Right ventricle myocardium superior (tissue), 1 donor: ENCODE measurements at regions of chr1 and their contacts with region 1.

Region 1: GRCh38 chr1:91929250-91929649 is 20.0 kb upstream of the BRDT start:
- DNase-seq: no peak
- ATAC-seq: peak; percentile 62

Region 2: GRCh38 chr1:91282695-91283420 is 646.4 kb before region 1 on chr1:
- intact Hi-C with region 1: loop called (anchors 5 kb)
- DNase-seq: no peak
- ATAC-seq: peak; percentile 91

Region 3: DNA sequence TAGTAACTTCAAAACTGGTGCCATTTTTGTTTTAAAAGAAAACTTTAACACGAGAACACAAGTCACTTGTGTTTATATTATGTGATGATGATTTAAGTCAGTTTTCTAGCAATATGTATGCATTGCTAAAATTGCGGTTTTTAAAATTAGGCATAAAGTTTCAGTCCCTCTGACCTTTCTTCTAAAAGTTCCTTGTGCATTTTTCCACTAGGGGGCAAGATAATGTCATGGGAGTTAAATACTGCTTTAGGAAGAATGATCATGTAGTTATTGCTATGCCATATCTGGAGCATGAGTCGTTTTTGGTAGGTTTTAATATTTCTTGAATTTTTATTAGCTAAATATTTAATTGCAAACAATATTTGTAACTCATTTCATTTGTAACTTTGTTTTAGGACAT is 417.9 kb before region 1 on chr1:
- intact Hi-C with region 1: loop called (anchors 5 kb)
- DNase-seq: no peak
- ATAC-seq: peak; percentile 67

Region 4: GRCh38 chr1:91712981-91713841 is 216.0 kb before region 1 on chr1:
- intact Hi-C with region 1: loop called (anchors 5 kb)
- DNase-seq: peak; percentile 72
- ATAC-seq: peak; percentile 81

Region 5: DNA sequence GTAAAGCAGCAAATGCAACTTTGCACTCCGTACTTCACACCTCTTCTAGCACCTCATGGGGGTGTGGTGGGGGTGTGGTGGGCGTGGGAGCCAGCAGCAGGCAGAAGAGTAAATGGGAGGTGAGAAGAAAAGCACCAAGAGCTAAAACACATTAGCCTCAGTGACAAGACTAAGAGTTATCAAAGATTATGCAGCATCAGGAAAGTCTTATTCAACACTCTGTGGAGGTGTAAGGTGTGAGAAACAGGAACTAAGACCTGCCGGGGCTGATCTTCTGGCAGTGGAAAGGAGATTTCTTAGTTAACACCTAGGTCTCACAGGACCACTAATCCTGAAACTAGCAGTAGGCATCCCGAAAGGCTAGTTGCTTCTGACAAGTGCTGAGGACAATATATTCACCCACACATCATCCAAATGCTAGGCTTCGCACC is 53.2 kb before region 1 on chr1:
- intact Hi-C with region 1: no loop called
- DNase-seq: no peak
- ATAC-seq: no peak

Region 6: GRCh38 chr1:92080128-92080985 is 151.1 kb after region 1 on chr1 and contains the start of gene BTBD8:
- intact Hi-C with region 1: no loop called
- DNase-seq: peak; percentile 91
- ATAC-seq: peak; percentile 98
- total RNA-seq, gene BTBD8: 5.9 TPM